Endothelial cell of umbilical vein (primary cell): ENCODE measurements at regions of chr20 and their contacts with region 1.

Region 1: GRCh38 chr20:24100385-24101011 is 111.9 kb upstream of the GGTLC1 start:
- DNase-seq: peak; percentile 64
- H3K4me3 ChIP-seq: no peak overlapping the region
- H3K27ac ChIP-seq: no peak overlapping the region
- H3K4me1 ChIP-seq: peaks cover 33% of the 10 kb centered on the region
- H3K27me3 ChIP-seq: peaks cover 0 to 2% of the 10 kb centered on the region in 2 experiments
- CTCF ChIP-seq: peak; percentile 77 to 86
- POLR2A ChIP-seq: no peak

Region 2: DNA sequence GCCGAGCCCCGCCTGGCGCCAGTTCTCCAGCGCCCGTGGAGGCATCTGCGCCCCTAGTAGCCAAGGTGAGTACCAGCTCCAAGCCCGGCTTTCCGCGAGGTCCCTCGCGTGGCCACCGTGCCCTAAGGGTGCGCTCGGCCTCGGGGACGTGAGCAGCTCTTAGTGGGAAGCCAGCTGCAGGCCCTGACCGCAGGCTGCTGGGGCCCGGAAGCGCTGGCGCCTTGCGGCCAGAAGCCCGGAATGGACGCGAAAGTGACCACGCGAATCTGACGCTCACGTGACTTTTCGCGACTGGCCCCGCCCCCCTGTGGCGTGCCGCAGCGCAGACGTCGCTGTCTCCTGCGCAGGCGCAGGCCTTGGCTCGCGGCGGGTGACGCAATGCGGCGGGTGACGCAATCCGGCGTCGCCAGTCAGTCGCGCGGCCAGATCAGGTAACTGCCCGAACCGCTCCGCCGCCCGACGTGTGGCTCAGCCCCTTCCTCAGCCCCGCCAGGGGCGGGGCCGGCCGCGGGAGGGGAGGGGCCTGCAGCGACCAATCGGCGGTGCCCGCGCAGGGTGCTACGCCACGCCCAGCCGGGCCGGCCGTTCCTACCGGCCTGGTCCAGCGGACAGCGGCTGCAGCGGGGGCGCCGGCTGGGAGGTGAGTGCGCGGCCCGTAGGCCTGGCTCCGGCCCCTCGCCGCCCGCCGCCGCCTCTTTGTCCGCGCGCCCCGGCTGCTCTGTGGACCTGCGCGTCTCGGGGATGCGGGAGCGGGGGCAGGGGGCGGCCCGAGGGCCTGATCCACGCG is 738.7 kb before region 1 on chr20 and contains the start of gene GZF1:
- CTCF ChIA-PET with region 1: no interaction called
- POLR2A ChIA-PET with region 1: no interaction called
- dilution Hi-C with region 1: no loop called
- intact Hi-C with region 1: loop called (anchors 10 kb)
- DNase-seq: peak; percentile 100
- H3K4me3 ChIP-seq: peak within 1 kb of the TSS; percentile 65 to 73 (median 67)
- H3K27ac ChIP-seq: peak within 1 kb of the TSS; percentile 90
- H3K4me1 ChIP-seq: peaks cover 40% of the 10 kb centered on the region
- H3K27me3 ChIP-seq: no peaks in the 10 kb centered on the region
- CTCF ChIP-seq: no peak
- POLR2A ChIP-seq: peak; percentile 93
- total RNA-seq, gene GZF1: 10.0 and 12.5 TPM in 2 replicates

Region 3: DNA sequence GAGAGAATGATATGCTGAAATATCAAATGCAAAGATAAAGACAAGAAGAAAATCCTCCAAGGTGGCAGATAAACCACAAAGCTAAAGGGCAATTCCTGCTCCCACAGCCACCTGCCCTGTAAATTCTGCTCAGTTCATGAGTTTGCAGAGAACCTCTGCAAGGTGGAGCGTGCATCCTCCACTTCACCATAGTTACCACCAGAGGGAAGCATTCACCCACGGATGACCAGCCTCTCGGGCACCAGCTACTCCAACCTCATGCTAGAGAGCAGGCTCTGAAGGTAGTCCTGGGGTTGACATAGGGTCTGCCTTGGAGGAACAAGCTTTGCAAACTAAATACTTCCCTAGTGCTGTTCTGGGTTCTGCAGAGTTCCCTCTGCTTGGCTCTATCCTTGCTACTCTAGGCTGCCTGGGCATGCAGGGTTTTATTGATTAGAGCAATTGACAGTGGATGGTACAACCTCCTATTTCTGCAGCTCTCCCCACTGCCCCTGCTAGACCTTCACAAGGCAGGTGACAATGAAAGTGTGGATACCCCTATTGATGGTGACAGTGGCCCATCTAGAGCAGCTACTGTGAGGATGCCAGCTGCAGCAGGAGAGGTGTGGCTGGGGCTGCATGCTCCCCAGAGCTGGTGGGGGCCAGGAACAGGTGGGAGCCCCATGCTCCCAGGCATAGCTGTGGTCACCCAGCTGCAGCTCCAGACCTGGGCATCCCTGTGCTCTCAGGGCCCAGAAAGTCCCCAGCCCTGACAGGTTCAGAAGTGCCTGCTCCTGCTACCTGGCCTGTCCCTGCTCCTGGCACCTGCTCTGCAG is 163.0 kb before region 1 on chr20:
- CTCF ChIA-PET with region 1: interaction called, 12 read pairs
- POLR2A ChIA-PET with region 1: no interaction called
- dilution Hi-C with region 1: no loop called
- intact Hi-C with region 1: loop called (anchors 1 kb)
- DNase-seq: peak; percentile 60
- H3K4me3 ChIP-seq: no peak overlapping the region
- H3K27ac ChIP-seq: no peak overlapping the region
- H3K4me1 ChIP-seq: no peaks in the 10 kb centered on the region
- H3K27me3 ChIP-seq: no peaks in the 10 kb centered on the region
- CTCF ChIP-seq: peak; percentile 54 to 73
- POLR2A ChIP-seq: no peak

Region 4: GRCh38 chr20:24112394-24112793 is 11.9 kb after region 1 on chr20:
- CTCF ChIA-PET with region 1: interaction called, 26 read pairs
- POLR2A ChIA-PET with region 1: no interaction called
- dilution Hi-C with region 1: no loop called
- intact Hi-C with region 1: no loop called
- DNase-seq: no peak
- H3K4me3 ChIP-seq: no peak overlapping the region
- H3K27ac ChIP-seq: no peak overlapping the region
- H3K4me1 ChIP-seq: peaks cover 9% of the 10 kb centered on the region
- H3K27me3 ChIP-seq: no peaks in the 10 kb centered on the region
- CTCF ChIP-seq: no peak
- POLR2A ChIP-seq: no peak

Region 5: DNA sequence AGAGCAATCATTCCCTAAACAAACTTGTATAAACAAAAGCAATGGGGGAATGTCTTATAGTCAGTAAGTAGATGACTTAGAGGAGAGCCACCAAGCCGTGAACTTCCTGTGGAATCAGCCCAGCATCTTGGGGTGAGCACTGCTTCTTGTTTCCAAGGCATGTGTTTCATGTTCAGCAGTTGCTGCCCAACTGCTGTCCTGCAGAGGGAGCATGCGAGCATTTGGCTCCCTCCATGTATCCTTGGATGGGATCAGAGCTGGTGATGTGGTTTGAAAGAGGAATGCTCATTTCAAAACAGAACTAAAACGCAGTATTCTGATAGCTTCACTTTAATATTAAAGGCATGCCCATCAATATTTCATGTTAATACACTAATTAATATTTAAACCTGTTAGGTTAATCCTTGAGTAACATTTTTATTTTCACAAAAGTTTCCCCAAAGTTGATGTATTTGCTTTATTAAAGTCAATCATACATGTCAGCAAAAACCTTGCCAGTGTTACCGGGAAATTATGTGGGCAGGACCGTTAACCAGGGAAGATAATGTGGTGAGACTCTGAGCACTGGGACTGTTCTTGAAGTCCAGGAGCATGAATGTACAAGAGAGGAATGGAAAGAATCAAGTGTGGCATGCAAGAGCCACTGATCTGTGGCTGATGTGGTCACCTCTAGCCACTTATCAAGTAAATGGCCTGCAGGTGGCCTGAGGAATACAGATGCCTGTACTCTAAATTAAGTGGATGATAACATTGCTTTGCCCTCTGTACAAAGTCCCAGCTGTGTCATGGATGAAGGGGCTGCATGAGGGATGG is 60.3 kb after region 1 on chr20:
- CTCF ChIA-PET with region 1: interaction called, 35 read pairs
- POLR2A ChIA-PET with region 1: no interaction called
- dilution Hi-C with region 1: no loop called
- intact Hi-C with region 1: loop called (anchors 1 kb)
- DNase-seq: peak; percentile 58
- H3K4me3 ChIP-seq: no peak overlapping the region
- H3K27ac ChIP-seq: no peak overlapping the region
- H3K4me1 ChIP-seq: peaks cover 14% of the 10 kb centered on the region
- H3K27me3 ChIP-seq: peaks cover 2 to 4% of the 10 kb centered on the region in 2 experiments
- CTCF ChIP-seq: peak; percentile 72 to 86
- POLR2A ChIP-seq: no peak

Region 6: GRCh38 chr20:25623736-25624499 is 1523.4 kb after region 1 on chr20 and contains the start of gene NANP:
- CTCF ChIA-PET with region 1: no interaction called
- POLR2A ChIA-PET with region 1: no interaction called
- dilution Hi-C with region 1: no loop called
- intact Hi-C with region 1: loop called (anchors 10 kb)
- DNase-seq: peak; percentile 99
- H3K4me3 ChIP-seq: peak within 1 kb of the TSS; percentile 55 to 85 (median 82)
- H3K27ac ChIP-seq: peak within 1 kb of the TSS; percentile 91
- H3K4me1 ChIP-seq: peaks cover 11% of the 10 kb centered on the region
- H3K27me3 ChIP-seq: no peaks in the 10 kb centered on the region
- CTCF ChIP-seq: no peak
- POLR2A ChIP-seq: peak; percentile 97
- total RNA-seq, gene NANP: 7.5 and 8.0 TPM in 2 replicates